HCT116 (cell line): ENCODE measurements at regions of chr2 and their contacts with region 1.

Region 1: DNA sequence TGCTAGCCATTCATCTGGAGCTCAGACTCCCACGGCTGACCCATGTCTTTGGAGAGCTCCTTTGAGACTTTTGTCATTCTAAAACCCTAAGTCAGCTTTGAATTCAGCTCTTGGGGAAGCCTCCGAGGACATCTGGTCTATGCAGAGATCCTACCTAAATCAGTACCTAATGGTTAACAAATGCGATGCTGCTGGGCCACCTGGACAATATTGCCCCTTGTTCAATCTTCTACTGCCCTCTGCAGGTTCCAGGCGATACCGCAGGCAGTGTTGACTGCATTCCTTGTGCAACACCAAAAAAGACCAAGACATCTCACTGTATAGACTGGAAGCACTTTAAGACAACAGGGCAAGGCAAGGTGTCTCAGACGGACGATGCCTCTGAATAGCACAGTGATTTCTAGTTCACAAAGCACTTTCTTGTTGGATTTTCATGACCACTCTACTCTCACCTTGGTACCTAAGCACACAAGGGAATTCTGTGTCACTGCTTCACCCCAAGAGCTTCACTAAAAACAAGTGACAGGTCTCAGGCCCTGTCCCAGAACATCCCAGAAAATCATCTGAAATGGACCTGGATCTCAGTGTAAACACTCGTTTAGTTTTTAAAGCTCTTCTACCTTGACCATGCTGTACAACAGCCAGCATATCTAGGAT is 80.9 kb downstream of the XDH start:
- DNase-seq: peak; percentile 54
- ATAC-seq: peak; percentile 89
- H3K4me3 ChIP-seq: no peak overlapping the region
- H3K27ac ChIP-seq: no peak overlapping the region
- H3K4me1 ChIP-seq: no peaks in the 10 kb centered on the region
- H3K27me3 ChIP-seq: peaks cover 16% of the 10 kb centered on the region; the same call in 1 of the 2 replicates
- CTCF ChIP-seq: peak; percentile 88 to 95 (median 94)
- POLR2A ChIP-seq: no peak
- RAD21 ChIP-seq: peak; percentile 93

Region 2: DNA sequence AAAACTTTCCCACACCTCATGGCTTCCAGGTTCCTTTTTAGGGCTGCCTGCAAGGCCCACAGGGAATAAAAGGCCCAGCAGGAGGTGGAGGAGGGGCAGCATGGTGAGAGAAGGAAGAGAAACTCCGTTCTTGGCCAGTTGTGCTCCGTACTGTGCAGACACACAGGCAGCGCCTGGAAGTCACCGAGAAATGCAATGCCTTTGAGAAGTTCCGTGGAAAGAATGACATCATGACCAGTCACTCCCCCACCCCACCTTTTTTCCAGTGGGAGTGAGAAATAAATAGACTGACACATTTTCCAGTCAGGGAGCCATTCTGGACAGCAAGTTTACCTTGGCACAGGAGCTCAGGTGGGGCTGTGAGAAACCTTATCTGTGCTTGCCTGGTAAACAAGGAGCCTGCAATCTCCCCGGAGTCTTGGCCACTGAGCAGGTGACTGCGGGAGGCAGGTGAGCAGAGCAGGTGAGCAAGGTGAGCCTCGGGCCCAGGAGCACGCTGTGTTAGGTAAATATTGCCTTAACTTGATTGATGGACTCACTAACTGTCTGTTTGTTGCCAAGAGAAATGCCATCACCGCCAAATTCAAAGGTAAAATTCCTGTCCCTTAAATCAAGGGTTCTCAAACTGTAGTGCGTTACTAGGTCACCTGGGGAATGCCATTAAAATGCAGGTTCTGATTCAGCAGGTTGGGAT is 1115.9 kb before region 1 on chr2:
- CTCF ChIA-PET with region 1: no interaction called
- POLR2A ChIA-PET with region 1: no interaction called
- RAD21 ChIA-PET with region 1: no interaction called
- intact Hi-C with region 1: loop called (anchors 10 kb)
- DNase-seq: peak; percentile 48
- ATAC-seq: peak; percentile 33
- H3K4me3 ChIP-seq: peak overlapping the region in 1 of 2 experiments; percentile 29; a peak in 1 of 4 replicates
- H3K27ac ChIP-seq: peak overlapping the region; percentile 55
- H3K4me1 ChIP-seq: peaks cover 25 to 37% of the 10 kb centered on the region in 2 experiments
- H3K27me3 ChIP-seq: peaks cover 5% of the 10 kb centered on the region; the same call in 1 of the 2 replicates
- CTCF ChIP-seq: no peak
- POLR2A ChIP-seq: no peak
- RAD21 ChIP-seq: peak; percentile 31; the same call in 1 of the 2 replicates

Region 3: DNA sequence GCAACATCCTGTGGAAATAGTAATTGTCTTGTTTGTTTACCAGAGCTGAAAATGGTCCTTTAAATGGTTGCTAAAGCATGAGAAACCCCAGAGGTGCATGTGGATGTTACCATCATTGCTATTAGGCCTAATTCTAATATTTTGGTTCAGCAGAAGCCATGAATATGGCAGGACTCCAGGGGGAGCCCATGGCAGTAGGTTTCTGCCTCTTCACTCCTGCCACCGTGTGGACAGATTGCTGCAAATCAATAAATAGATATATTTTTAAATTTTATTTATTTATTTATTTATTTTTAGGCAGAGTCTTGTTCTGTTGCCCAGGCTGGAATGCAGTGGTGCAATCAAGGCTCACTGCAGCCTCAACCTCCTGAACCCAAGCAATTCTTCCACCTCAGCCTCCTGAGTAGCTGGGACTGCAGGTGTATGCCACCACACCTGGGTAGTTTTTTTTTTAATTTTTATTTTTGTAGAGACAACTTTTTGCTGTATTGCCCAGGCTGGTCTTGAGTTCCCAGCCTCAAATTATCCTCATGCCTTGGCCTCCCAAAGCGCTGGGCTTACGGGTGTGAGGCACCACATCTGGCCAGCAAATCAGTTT is 471.5 kb before region 1 on chr2:
- CTCF ChIA-PET with region 1: no interaction called
- POLR2A ChIA-PET with region 1: no interaction called
- RAD21 ChIA-PET with region 1: no interaction called
- intact Hi-C with region 1: loop called (anchors 1 kb)
- DNase-seq: peak; percentile 55
- ATAC-seq: peak; percentile 55
- H3K4me3 ChIP-seq: no peak overlapping the region
- H3K27ac ChIP-seq: no peak overlapping the region
- H3K4me1 ChIP-seq: no peaks in the 10 kb centered on the region
- H3K27me3 ChIP-seq: peaks cover 6% of the 10 kb centered on the region; the same call in 1 of the 2 replicates
- CTCF ChIP-seq: peak; percentile 52 to 99 (median 77)
- POLR2A ChIP-seq: no peak
- RAD21 ChIP-seq: peak; percentile 67

Region 4: GRCh38 chr2:31170071-31170698 is 163.5 kb before region 1 on chr2:
- CTCF ChIA-PET with region 1: interaction called, 6 read pairs
- POLR2A ChIA-PET with region 1: no interaction called
- RAD21 ChIA-PET with region 1: no interaction called
- intact Hi-C with region 1: loop called (anchors 1 kb)
- DNase-seq: peak; percentile 40
- ATAC-seq: peak; percentile 97
- H3K4me3 ChIP-seq: no peak overlapping the region
- H3K27ac ChIP-seq: no peak overlapping the region
- H3K4me1 ChIP-seq: no peaks in the 10 kb centered on the region
- H3K27me3 ChIP-seq: peaks cover 21% of the 10 kb centered on the region; the same call in 1 of the 2 replicates
- CTCF ChIP-seq: peak; percentile 86 to 92 (median 90)
- POLR2A ChIP-seq: no peak
- RAD21 ChIP-seq: peak; percentile 89

Region 5: DNA sequence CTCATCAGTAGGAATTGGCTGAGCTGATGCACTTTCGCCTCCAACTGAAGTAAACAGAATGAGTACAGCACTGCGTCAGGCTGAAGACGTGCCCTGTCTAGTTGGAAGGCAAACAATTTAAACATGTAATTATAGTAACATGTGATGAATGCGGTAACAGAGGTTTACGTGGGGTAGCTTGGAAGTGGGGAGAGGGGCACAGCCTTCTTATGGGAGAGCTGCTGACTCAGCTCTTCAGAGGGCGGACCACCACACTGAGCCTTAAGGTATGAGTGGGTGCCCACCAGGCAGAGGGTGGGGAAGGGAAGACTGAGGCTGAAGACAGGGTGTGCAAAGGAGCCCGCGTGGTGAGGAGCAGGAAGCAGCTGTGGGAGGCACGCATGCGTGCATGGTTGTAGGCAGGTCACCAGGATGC is 105.9 kb before region 1 on chr2:
- CTCF ChIA-PET with region 1: no interaction called
- POLR2A ChIA-PET with region 1: no interaction called
- RAD21 ChIA-PET with region 1: no interaction called
- intact Hi-C with region 1: no loop called
- DNase-seq: no peak
- ATAC-seq: no peak
- H3K4me3 ChIP-seq: no peak overlapping the region
- H3K27ac ChIP-seq: no peak overlapping the region
- H3K4me1 ChIP-seq: no peaks in the 10 kb centered on the region
- H3K27me3 ChIP-seq: peaks cover 56% of the 10 kb centered on the region
- CTCF ChIP-seq: no peak
- POLR2A ChIP-seq: no peak
- RAD21 ChIP-seq: no peak

Region 6: GRCh38 chr2:31372097-31372496 is 38.4 kb after region 1 on chr2:
- CTCF ChIA-PET with region 1: no interaction called
- POLR2A ChIA-PET with region 1: no interaction called
- RAD21 ChIA-PET with region 1: no interaction called
- intact Hi-C with region 1: no loop called
- DNase-seq: no peak
- ATAC-seq: no peak
- H3K4me3 ChIP-seq: no peak overlapping the region
- H3K27ac ChIP-seq: no peak overlapping the region
- H3K4me1 ChIP-seq: no peaks in the 10 kb centered on the region
- H3K27me3 ChIP-seq: no peaks in the 10 kb centered on the region
- CTCF ChIP-seq: no peak
- POLR2A ChIP-seq: no peak
- RAD21 ChIP-seq: no peak